Panc1 (cell line): ENCODE measurements at regions of chr6 and their contacts with region 1.

Region 1: DNA sequence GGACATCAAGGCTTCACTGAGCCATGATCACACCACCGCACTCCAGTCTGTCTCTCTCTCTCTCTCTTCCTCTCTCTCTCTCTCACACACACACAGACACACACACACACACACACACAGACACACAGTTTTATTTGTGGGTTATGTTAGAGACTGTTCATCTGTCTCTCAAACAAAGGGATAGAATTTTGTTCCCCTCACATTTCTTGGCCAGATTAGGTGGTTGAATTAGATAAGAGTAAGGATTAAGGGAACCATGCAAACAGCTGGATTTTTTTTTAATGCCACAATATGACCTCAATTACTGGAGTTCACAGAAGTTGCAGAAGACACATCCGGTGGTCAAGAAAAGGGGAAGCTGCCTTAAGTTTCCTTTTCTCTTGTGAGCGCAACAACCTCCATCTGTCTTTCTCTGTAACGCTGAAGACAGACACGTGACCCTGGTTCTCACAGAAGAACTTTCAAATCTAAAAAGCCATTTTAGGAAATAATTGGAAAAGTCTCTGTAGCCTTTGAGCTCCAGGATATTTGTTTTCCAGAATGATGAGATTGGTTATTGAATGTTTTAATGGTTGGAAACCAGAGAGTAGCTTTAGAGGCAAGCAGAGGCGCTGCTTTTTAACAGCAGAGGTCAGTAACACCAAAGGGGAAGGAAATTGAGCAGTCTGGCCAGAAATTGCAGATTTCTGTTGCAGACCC is 33.0 kb upstream of the LGSN start:
- DNase-seq: no peak
- ATAC-seq: no peak
- H3K4me3 ChIP-seq: no peak overlapping the region
- H3K27ac ChIP-seq: no peak overlapping the region
- H3K4me1 ChIP-seq: no peaks in the 10 kb centered on the region
- H3K27me3 ChIP-seq: no peaks in the 10 kb centered on the region
- CTCF ChIP-seq: peak; percentile 66

Region 2: GRCh38 chr6:62013731-62014130 is 1339.0 kb before region 1 on chr6:
- CTCF ChIA-PET with region 1: no interaction called
- POLR2A ChIA-PET with region 1: no interaction called
- in situ Hi-C with region 1: no loop called
- intact Hi-C with region 1: no loop called
- DNase-seq: no peak
- ATAC-seq: no peak
- H3K4me3 ChIP-seq: no peak overlapping the region
- H3K27ac ChIP-seq: no peak overlapping the region
- H3K4me1 ChIP-seq: no peaks in the 10 kb centered on the region
- H3K27me3 ChIP-seq: no peaks in the 10 kb centered on the region
- CTCF ChIP-seq: no peak

Region 3: DNA sequence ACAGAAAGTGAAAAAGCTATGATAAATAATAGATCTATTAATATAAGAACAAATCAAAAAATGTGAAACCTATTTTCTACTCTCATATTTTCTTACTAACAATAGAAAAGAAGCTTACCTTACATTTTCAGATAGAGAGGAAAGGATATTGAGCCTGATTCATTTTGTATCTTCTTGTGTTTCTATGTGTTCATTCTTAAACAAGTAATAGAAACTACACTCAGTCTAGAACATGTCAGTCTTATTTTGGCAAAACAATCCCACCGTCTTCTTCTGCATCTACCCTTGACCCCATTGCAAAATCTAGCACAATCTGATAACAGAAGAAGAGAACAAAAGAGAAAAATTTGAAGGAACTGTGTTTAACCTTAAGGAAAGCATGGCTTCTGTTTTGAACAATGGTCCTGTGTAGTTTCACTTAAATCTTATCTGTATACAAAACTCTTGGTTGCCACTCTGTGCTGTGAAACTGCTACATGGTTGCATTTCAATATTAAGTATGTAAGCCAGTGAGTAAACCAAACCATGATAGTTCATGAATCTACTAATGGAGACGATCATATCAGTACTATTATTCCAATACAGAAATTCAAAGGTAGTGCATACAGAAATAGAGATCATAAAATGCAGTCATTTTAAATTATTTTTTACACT is 36.6 kb after region 1 on chr6:
- CTCF ChIA-PET with region 1: no interaction called
- POLR2A ChIA-PET with region 1: no interaction called
- in situ Hi-C with region 1: no loop called
- intact Hi-C with region 1: no loop called
- DNase-seq: no peak
- ATAC-seq: no peak
- H3K4me3 ChIP-seq: no peak overlapping the region
- H3K27ac ChIP-seq: no peak overlapping the region
- H3K4me1 ChIP-seq: no peaks in the 10 kb centered on the region
- H3K27me3 ChIP-seq: no peaks in the 10 kb centered on the region
- CTCF ChIP-seq: no peak

Region 4: GRCh38 chr6:63571881-63572732 is 219.4 kb after region 1 on chr6 and contains the starts of genes LOC128125822 and PTP4A1:
- CTCF ChIA-PET with region 1: interaction called, 7 read pairs
- POLR2A ChIA-PET with region 1: no interaction called
- in situ Hi-C with region 1: no loop called
- intact Hi-C with region 1: loop called (anchors 5 kb)
- DNase-seq: peak; percentile 85
- ATAC-seq: peak; percentile 97
- H3K4me3 ChIP-seq: peak within 1 kb of the TSS; percentile 82 to 85
- H3K27ac ChIP-seq: peak within 1 kb of the TSS; percentile 98
- H3K4me1 ChIP-seq: peaks cover 22% of the 10 kb centered on the region
- H3K27me3 ChIP-seq: no peaks in the 10 kb centered on the region; the same call in 1 of the 2 replicates
- CTCF ChIP-seq: no peak
- total RNA-seq, gene PTP4A1: 71.0 TPM

Region 5: DNA sequence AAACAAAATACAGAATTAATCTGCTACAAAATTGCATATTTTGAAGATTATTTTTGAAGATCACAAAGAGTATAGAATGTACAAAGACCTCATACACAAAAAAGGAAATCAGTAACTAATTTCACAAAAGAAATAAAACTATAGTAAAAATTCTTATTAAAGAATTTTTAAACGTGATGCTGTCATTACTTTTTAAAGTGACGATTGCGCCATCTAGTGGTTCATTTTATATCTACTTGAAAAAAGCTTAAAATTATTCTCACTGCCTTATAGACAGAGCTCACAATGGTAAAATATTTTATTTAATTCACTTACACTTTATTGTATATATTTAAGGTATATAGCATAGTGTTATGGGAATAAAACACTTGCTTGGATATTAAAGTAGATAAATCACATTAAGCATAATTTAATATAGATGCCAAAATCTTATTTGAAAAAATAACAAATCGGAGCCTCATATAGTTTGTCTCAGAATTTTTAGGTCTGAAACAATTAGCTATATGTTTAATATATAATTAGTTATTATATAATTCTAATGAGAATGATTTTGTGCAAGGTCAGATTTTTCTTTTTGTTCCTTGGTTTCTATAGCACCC is 411.7 kb after region 1 on chr6:
- CTCF ChIA-PET with region 1: no interaction called
- POLR2A ChIA-PET with region 1: no interaction called
- in situ Hi-C with region 1: no loop called
- intact Hi-C with region 1: loop called (anchors 5 kb)
- DNase-seq: peak; percentile 10
- ATAC-seq: no peak
- H3K4me3 ChIP-seq: no peak overlapping the region
- H3K27ac ChIP-seq: no peak overlapping the region
- H3K4me1 ChIP-seq: no peaks in the 10 kb centered on the region
- H3K27me3 ChIP-seq: peaks cover 2% of the 10 kb centered on the region; the same call in 1 of the 2 replicates
- CTCF ChIP-seq: no peak; the same call in 1 of the 2 replicates